ENCODE measurements at regions of chr10 and their contacts with region 1.

Region 1: DNA sequence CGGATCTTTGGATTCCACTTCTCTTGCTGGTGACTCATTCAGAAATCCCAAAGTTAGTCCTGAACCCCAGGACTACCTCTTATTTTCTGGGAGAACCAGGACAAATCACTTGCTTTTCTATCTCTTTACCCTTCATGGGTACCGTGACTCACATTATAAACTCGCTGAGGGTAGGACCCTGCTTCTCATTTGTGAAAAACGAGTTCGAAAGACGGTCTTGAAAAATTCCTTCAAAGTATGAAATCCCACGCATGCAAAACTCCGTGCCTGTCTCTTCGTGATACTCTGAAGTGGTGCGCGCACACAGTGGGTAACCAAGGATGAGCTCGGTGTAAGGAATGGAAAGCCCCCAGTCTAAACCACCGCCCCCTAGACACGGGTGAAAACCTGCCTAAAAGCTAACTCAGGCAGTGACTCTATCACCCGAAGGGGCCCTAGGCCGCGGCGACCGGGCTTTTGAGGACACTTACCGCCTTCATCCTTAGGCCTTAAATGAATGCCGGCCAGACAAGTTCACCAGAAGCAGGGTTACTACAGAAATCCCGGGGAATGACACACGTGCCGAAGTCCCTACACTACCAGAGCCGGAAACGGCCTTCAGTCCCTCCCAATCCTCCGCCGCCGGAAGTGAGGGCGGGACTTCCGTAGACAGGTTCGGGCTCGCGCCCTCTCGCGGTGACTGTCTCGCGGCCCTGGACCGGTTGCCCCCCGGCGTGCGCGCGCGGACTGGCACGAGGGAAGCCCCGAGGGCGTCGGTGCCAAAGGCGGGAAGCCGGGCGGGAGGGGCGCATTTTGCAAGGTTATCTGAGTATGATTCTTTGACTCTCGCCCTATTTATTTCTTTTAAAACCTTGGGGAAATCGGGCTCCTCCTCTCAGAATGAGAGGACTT is at the start of gene NOC3L:
- DNase-seq: peak; percentile 90
- H3K4me3 Mint-ChIP-seq: peak within 1 kb of the TSS; percentile 95
- H3K27ac Mint-ChIP-seq: peak within 1 kb of the TSS; percentile 90
- H3K4me1 Mint-ChIP-seq: peaks cover 21% of the 10 kb centered on the region
- H3K27me3 Mint-ChIP-seq: peaks cover 13% of the 10 kb centered on the region
- total RNA-seq, gene NOC3L: 41.2 and 43.6 TPM in 2 replicates

Region 2: GRCh38 chr10:94320285-94320914 is 42.2 kb before region 1 on chr10:
- intact Hi-C with region 1: loop called (anchors 5 kb)
- DNase-seq: peak; percentile 34
- H3K4me3 Mint-ChIP-seq: no peak overlapping the region
- H3K27ac Mint-ChIP-seq: no peak overlapping the region
- H3K4me1 Mint-ChIP-seq: peaks cover 4% of the 10 kb centered on the region
- H3K27me3 Mint-ChIP-seq: no peaks in the 10 kb centered on the region

Region 3: GRCh38 chr10:94402015-94402842 is 39.6 kb after region 1 on chr10 and contains the start of gene TBC1D12:
- intact Hi-C with region 1: loop called (anchors 2 kb)
- DNase-seq: peak; percentile 16
- H3K4me3 Mint-ChIP-seq: peak within 1 kb of the TSS; percentile 64
- H3K27ac Mint-ChIP-seq: no peak within 1 kb of the TSS
- H3K4me1 Mint-ChIP-seq: peaks cover 7% of the 10 kb centered on the region
- H3K27me3 Mint-ChIP-seq: peaks cover 60% of the 10 kb centered on the region
- total RNA-seq, gene TBC1D12: 0.85 and 1.4 TPM in 2 replicates

Region 4: GRCh38 chr10:94439275-94439861 is 76.8 kb after region 1 on chr10:
- intact Hi-C with region 1: loop called (anchors 1 kb)
- DNase-seq: no peak
- H3K4me3 Mint-ChIP-seq: no peak overlapping the region
- H3K27ac Mint-ChIP-seq: no peak overlapping the region
- H3K4me1 Mint-ChIP-seq: no peaks in the 10 kb centered on the region
- H3K27me3 Mint-ChIP-seq: peaks cover 3% of the 10 kb centered on the region

Region 5: DNA sequence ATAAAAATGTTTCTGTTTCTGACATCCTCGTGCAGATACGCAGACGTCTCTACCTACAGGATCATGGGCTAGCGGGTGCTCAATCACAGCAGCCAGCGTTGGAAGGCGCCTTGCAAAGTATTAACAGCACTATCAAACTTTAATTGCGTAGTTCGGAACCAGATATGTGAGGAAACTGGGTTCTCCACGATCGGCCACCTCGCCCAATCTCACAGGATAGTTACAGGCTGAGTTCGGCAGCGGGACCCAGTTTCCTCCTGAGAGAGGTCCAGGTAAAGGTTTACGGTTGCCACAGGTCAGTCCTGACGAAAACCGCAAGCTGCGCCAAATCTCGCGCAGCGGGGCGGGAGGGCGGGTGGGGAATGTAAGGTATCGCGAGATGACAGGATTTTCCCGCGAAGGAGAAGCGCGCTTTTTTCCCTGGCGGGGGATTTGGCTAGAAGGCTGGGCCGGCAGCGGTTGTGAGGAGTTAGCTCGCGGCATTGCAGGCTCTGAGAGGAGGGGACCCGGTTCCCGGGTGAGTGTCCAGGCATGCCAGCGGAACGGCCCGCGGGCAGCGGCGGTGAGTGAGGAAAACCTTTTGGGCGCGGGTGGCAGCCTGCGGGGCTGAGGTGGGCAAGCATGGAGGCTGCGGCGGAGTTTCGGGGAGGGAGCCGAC is 182.9 kb after region 1 on chr10 and contains the start of gene HELLS:
- intact Hi-C with region 1: loop called (anchors 5 kb)
- DNase-seq: peak; percentile 76
- H3K4me3 Mint-ChIP-seq: peak within 1 kb of the TSS; percentile 99
- H3K27ac Mint-ChIP-seq: peak within 1 kb of the TSS; percentile 98
- H3K4me1 Mint-ChIP-seq: peaks cover 35% of the 10 kb centered on the region
- H3K27me3 Mint-ChIP-seq: peaks cover 5% of the 10 kb centered on the region
- total RNA-seq, gene HELLS: 224 and 230 TPM in 2 replicates

Measured in activated T-helper 2 cell treated with anti-CD3 and anti-CD28 coated beads, Interferon-gamma antibody, Interleukin-2, Interleukin-4, amounts not matched to agents 10 μg/mL and 5 μg/mL and 100 μg/mL, durations not matched to agents 14 hours and 24 hours and 36 hours (primary cell).